ENCODE measurements at regions of chr12 and their contacts with region 1.

Region 1: DNA sequence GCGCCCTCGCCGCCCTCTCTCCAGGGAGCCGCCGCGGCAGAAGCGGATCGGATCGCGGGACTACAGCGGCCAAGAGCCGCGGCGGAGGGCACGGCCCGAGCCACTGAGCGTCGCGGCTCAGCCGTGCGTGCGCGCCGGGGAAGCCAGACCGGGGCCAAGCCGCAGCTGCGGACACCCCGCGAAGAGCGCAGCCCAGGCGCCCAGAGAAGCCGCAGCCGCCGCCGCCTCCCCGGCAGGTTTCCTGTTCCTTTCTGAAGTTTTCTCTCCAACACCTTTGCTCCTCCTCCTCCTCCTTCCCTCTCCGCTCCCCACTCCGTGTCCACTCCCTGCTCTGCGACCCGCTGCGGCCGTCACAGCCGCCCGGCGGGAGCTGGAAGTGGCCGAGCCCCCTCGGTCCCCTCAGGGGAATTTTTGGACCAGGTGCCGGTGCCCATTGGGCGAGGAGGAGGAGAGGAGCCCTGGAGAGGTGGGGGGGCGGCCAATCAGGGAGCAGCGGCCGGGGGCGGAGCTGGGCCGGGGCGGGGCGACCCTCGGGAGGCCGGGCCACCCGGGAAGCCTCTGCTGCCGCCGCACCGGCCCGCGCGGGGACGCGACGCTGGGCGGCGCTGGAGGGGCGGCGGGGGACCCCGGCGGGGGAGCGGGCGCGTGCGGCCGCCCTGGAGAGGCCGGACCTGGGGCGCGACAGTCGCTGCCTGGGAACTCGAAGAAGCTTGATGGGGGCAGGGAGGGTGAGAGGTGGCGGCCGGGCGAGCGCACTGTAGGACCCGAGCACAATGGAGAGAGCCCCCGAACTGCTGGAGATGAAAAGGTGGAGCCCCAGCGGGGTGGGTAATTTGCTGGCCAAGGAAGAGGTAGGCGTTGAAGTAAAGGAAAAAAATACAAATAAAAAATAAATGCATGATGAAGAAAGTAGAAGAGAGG is at the start of gene ITPR2:
- DNase-seq: peak; percentile 81 to 94 (median 89)
- ATAC-seq: peak; percentile 96
- H3K4me3 ChIP-seq: peak within 1 kb of the TSS; percentile 96
- H3K4me3 Mint-ChIP-seq: peak within 1 kb of the TSS; percentile 92 to 100 (median 98)
- H3K27ac ChIP-seq: peak within 1 kb of the TSS; percentile 92
- H3K27ac Mint-ChIP-seq: peak within 1 kb of the TSS; percentile 95 to 99 (median 98)
- H3K4me1 ChIP-seq: peaks cover 12 to 16% of the 10 kb centered on the region in 2 donors
- H3K4me1 Mint-ChIP-seq: peaks cover 26 to 51% (median 45%) of the 10 kb centered on the region in 7 donors
- H3K27me3 ChIP-seq: no peaks in the 10 kb centered on the region
- H3K27me3 Mint-ChIP-seq: no peaks in the 10 kb centered on the region
- total RNA-seq, gene ITPR2: 44.9 to 71.5 (median 59.2) TPM

Region 2: DNA sequence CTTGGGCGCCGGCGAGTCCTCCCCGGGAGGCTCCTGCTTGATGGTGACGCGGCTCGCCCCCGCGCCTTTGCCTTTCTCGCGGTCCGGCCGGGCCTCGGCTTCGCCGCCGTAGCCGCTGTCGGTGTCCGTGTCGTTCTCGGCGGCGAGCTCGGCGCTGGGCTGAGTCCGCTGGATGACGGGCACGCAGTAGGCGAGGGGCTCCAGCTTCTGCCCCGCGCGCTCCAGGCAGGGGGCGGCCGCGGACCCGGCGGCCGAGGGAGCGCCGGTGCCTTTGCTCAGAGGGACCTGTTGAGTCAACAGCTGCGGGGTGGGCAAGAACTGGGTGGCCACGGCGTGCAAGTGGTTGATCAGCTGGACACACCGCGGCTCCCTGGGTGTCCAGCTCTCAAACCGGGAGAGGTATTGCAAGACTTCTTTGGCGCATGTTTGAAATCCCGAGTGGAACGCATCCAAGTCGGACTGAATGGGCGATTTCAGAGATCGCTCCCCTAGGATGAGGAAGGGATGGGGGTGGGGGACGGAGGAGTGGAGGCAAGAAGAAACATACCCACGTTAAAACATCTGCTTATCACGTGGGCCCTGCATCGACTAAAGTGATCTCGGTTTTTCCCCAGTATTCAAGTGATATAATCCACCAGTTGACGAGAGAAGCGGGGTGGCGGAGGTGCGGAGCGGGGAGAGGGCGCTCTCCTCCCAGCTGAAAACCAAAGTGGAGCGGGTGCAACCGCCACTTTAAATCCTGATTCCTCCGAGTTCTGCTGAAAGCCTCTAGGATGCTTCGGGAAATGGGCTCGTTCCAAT is 710.2 kb before region 1 on chr12:
- CTCF ChIA-PET with region 1: no interaction called
- POLR2A ChIA-PET with region 1: interaction called, 3 read pairs
- intact Hi-C with region 1: loop called in 1 of 2 experiments (anchors 5 kb)
- DNase-seq: peak in 7 of 9 donors; percentile 16 to 51 (median 22)
- ATAC-seq: peak; percentile 44
- H3K4me3 ChIP-seq: peak overlapping the region; percentile 39
- H3K4me3 Mint-ChIP-seq: peak overlapping the region; percentile 80 to 91 (median 88)
- H3K27ac ChIP-seq: no peak overlapping the region
- H3K27ac Mint-ChIP-seq: peak overlapping the region in 3 of 9 donors; percentile 46 to 75 (median 58)
- H3K4me1 ChIP-seq: peaks cover 12 to 21% of the 10 kb centered on the region in 2 donors
- H3K4me1 Mint-ChIP-seq: peaks cover 22 to 49% (median 41%) of the 10 kb centered on the region in 7 donors
- H3K27me3 ChIP-seq: peaks cover 23 to 42% of the 10 kb centered on the region in 2 donors
- H3K27me3 Mint-ChIP-seq: peaks cover 67 to 86% (median 78%) of the 10 kb centered on the region in 5 donors

Region 3: DNA sequence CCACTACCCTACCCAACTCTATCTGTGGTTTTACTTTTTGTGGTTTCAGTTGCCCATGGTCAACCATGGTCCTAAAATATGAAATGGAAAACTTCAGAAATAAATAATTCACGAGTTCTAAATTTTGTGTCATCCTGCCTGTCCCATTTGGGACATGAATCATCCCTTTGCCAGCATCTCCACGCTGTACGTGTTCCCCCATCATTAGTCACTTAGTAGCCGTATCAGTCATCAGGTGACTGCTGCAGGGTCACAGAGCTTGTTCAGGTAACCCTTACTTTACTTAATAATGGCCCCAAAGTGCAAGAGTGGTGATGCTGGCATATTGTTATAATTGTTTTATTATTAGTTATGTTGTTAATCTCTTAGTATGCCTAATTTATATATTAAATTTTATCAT is 209.9 kb before region 1 on chr12:
- CTCF ChIA-PET with region 1: no interaction called
- POLR2A ChIA-PET with region 1: no interaction called
- intact Hi-C with region 1: no loop called
- DNase-seq: no peak
- ATAC-seq: no peak
- H3K4me3 ChIP-seq: no peak overlapping the region
- H3K4me3 Mint-ChIP-seq: no peak overlapping the region
- H3K27ac ChIP-seq: no peak overlapping the region
- H3K27ac Mint-ChIP-seq: no peak overlapping the region
- H3K4me1 ChIP-seq: no peaks in the 10 kb centered on the region
- H3K4me1 Mint-ChIP-seq: peaks cover 0 to 22% (median 0%) of the 10 kb centered on the region in 7 donors
- H3K27me3 ChIP-seq: no peaks in the 10 kb centered on the region
- H3K27me3 Mint-ChIP-seq: no peaks in the 10 kb centered on the region

Region 4: GRCh38 chr12:26845057-26845666 is 12.1 kb after region 1 on chr12:
- CTCF ChIA-PET with region 1: interaction called, 6 read pairs
- POLR2A ChIA-PET with region 1: interaction called, 8 read pairs
- intact Hi-C with region 1: loop called in 1 of 2 experiments (anchors 1 kb)
- DNase-seq: no peak
- ATAC-seq: no peak
- H3K4me3 ChIP-seq: no peak overlapping the region
- H3K4me3 Mint-ChIP-seq: peak overlapping the region in 1 of 10 donors; percentile 29
- H3K27ac ChIP-seq: no peak overlapping the region
- H3K27ac Mint-ChIP-seq: no peak overlapping the region
- H3K4me1 ChIP-seq: peaks cover 0 to 6% of the 10 kb centered on the region in 2 donors
- H3K4me1 Mint-ChIP-seq: peaks cover 5 to 19% (median 12%) of the 10 kb centered on the region in 7 donors
- H3K27me3 ChIP-seq: no peaks in the 10 kb centered on the region
- H3K27me3 Mint-ChIP-seq: peaks cover 0 to 16% (median 4%) of the 10 kb centered on the region in 5 donors

Region 5: DNA sequence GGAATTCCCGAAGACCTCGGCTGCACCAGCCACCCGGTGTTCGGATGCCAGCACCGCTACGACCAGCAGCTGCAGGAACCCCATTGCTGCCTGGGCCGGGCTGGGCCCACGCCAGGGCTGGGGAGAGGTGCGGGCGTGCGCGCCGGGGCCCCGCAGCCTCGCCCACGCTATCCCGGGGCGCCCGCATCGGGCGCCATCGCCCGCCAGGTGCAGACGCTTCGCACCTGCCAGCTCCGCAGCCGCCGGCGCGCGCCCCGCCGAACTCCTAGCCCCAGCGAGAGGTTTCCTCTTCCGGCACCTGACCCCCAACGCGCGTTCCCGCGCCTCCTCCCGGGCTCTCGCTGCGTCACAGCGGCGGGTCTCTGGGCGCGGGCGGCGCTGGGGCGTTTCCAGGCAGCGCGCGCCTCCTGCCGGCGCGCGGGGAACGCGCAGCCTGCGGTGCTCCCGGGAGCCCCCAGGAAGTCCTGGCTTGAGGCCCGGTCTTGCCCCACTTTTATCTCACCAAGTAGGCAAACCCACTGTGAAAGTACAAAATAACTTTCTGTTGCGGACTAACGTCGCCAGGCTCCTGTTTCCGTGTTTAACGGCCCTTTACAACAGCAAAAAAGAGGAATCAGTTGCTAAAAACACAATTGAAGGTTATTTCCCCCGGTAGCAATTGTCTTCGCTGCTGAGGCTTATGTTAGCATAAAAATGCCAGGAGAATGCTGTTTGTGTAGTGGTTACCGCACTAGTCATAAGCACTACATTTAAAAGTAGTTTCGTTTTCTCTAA is 181.2 kb after region 1 on chr12 and contains the start of gene TM7SF3:
- CTCF ChIA-PET with region 1: interaction called, 17 read pairs
- POLR2A ChIA-PET with region 1: interaction called, 23 read pairs
- intact Hi-C with region 1: loop called (anchors 1 kb)
- DNase-seq: peak; percentile 96 to 98 (median 97)
- ATAC-seq: peak; percentile 95
- H3K4me3 ChIP-seq: peak within 1 kb of the TSS; percentile 92
- H3K4me3 Mint-ChIP-seq: peak within 1 kb of the TSS; percentile 80 to 97 (median 94)
- H3K27ac ChIP-seq: peak within 1 kb of the TSS; percentile 84
- H3K27ac Mint-ChIP-seq: peak within 1 kb of the TSS; percentile 88 to 97 (median 96)
- H3K4me1 ChIP-seq: peaks cover 24 to 29% of the 10 kb centered on the region in 2 donors
- H3K4me1 Mint-ChIP-seq: peaks cover 22 to 60% (median 51%) of the 10 kb centered on the region in 7 donors
- H3K27me3 ChIP-seq: no peaks in the 10 kb centered on the region
- H3K27me3 Mint-ChIP-seq: no peaks in the 10 kb centered on the region
- total RNA-seq, gene TM7SF3: 24.4 to 57.3 (median 28.5) TPM

Region 6: GRCh38 chr12:27243804-27244683 is 411.0 kb after region 1 on chr12 and contains the start of gene STK38L:
- CTCF ChIA-PET with region 1: no interaction called
- POLR2A ChIA-PET with region 1: interaction called, 3 read pairs
- intact Hi-C with region 1: loop called (anchors 1 to 2 kb)
- DNase-seq: peak; percentile 94 to 98 (median 96)
- ATAC-seq: peak; percentile 98
- H3K4me3 ChIP-seq: peak within 1 kb of the TSS; percentile 84
- H3K4me3 Mint-ChIP-seq: peak within 1 kb of the TSS; percentile 97 to 100 (median 99)
- H3K27ac ChIP-seq: peak within 1 kb of the TSS; percentile 82
- H3K27ac Mint-ChIP-seq: peak within 1 kb of the TSS; percentile 92 to 99 (median 97)
- H3K4me1 ChIP-seq: peaks cover 12 to 13% of the 10 kb centered on the region in 2 donors
- H3K4me1 Mint-ChIP-seq: peaks cover 17 to 62% (median 51%) of the 10 kb centered on the region in 7 donors
- H3K27me3 ChIP-seq: no peaks in the 10 kb centered on the region
- H3K27me3 Mint-ChIP-seq: no peaks in the 10 kb centered on the region
- total RNA-seq, gene STK38L: 16.2 to 22.8 (median 21.2) TPM

Region 7: DNA sequence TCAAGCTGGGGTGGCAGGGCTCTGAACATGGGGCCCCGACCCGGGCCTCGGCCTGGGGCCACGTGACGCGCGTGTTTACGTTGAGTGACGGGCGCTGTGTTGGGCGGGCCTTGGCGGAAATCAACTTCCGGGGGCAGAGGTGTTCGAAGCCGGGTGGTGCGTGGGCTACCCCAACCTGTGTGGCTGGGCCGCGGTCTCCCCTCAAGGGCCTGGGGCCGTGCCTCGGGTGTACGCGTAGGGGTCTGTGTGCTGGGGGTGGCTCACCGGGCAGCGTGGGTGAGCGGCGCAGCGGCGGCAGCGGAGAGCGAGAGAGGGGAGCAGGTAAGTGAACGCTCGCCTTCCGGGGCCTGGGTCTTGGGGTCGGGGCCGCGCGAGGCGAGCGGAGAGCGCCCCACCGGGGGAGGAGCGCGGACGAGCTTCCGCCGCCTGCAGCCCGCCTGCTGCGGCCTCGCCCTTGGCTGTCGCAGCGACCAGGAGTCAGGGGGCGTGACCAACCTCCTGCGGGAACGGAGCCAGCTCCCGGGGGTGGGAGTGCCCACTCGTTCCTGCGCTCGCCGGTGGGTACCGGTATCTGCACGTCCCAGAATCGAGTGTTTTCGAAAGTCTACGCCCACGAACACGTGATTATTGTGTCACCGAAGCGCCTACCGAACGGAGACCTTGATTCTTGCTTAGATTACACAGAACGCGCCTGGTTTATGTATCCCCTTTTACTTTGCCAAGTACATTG is 1357.4 kb after region 1 on chr12 and contains the start of gene CCDC91:
- CTCF ChIA-PET with region 1: no interaction called
- POLR2A ChIA-PET with region 1: interaction called, 5 read pairs
- intact Hi-C with region 1: loop called in 1 of 2 experiments (anchors 1 kb)
- DNase-seq: peak; percentile 83 to 95 (median 90)
- ATAC-seq: peak; percentile 90
- H3K4me3 ChIP-seq: peak within 1 kb of the TSS; percentile 80
- H3K4me3 Mint-ChIP-seq: peak within 1 kb of the TSS; percentile 88 to 98 (median 96)
- H3K27ac ChIP-seq: peak within 1 kb of the TSS; percentile 98
- H3K27ac Mint-ChIP-seq: peak within 1 kb of the TSS; percentile 98 to 100 (median 99)
- H3K4me1 ChIP-seq: peaks cover 19 to 25% of the 10 kb centered on the region in 2 donors
- H3K4me1 Mint-ChIP-seq: peaks cover 27 to 79% (median 68%) of the 10 kb centered on the region in 7 donors
- H3K27me3 ChIP-seq: no peaks in the 10 kb centered on the region
- H3K27me3 Mint-ChIP-seq: no peaks in the 10 kb centered on the region
- total RNA-seq, gene CCDC91: 20.2 to 105 (median 70.4) TPM

Measured in naive thymus-derived CD4-positive, alpha-beta T cell (primary cell).